Activated CD4-positive, alpha-beta T cell treated with anti-CD3 and anti-CD28 coated beads, Interleukin-2, amount 10 ng/mL, durations not matched to agents 24 days and 14 days (primary cell): ENCODE measurements at regions of chr11 and their contacts with region 1.

Region 1: DNA sequence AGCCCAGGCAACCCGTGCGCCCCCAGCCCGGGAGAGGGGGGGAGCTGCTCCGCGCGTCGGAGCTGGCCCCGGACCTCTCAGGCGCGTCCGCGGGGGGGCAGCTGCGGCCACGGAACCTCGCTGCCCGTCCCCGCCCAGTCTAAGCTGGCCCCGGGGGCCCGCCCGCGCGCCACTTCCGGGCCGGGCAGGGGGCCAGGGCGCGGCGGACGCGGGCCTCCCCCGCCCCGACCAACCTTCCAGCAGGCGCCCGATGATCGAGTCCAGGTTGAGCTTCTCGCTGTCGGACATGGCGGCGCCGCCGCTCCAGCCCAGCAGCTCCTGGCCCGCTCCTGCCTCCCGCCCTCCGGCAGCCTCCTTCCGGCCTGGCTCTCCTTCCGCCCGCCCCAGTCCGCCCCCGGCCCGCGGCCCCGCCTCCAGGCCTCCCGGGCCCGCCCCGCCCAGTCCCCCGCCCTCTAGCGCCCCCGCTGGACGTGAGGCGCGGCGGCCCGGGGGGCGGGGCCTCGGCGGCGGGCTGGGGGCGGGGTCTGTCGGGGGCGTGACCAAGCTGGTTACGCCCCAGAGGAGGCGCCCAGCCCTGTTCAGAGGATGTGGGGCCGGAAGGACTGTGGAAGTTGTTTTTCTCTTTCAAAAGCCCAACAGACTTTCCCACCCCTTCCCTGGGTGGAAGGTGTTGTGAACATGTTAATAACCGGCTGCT is at the start of gene PPP1CA:
- DNase-seq: peak; percentile 96
- H3K4me3 Mint-ChIP-seq: peak within 1 kb of the TSS; percentile 91
- H3K27ac Mint-ChIP-seq: peak within 1 kb of the TSS; percentile 87
- H3K4me1 Mint-ChIP-seq: peaks cover 45% of the 10 kb centered on the region
- H3K27me3 Mint-ChIP-seq: no peaks in the 10 kb centered on the region
- total RNA-seq, gene PPP1CA: 251 and 252 TPM in 2 replicates

Region 2: GRCh38 chr11:66842896-66843775 is 558.5 kb before region 1 on chr11 and contains the start of gene RCE1:
- intact Hi-C with region 1: no loop called
- DNase-seq: peak; percentile 98
- H3K4me3 Mint-ChIP-seq: peak within 1 kb of the TSS; percentile 91
- H3K27ac Mint-ChIP-seq: peak within 1 kb of the TSS; percentile 96
- H3K4me1 Mint-ChIP-seq: peaks cover 42% of the 10 kb centered on the region
- H3K27me3 Mint-ChIP-seq: no peaks in the 10 kb centered on the region
- total RNA-seq, gene RCE1: 28.5 and 32.9 TPM in 2 replicates

Region 3: GRCh38 chr11:67373925-67374618 is 27.6 kb before region 1 on chr11:
- intact Hi-C with region 1: no loop called
- DNase-seq: peak; percentile 83
- H3K4me3 Mint-ChIP-seq: peak overlapping the region; percentile 88
- H3K27ac Mint-ChIP-seq: peak overlapping the region; percentile 82
- H3K4me1 Mint-ChIP-seq: peaks cover 25% of the 10 kb centered on the region
- H3K27me3 Mint-ChIP-seq: peaks cover 55% of the 10 kb centered on the region

Region 4: GRCh38 chr11:67391304-67392132 is 10.1 kb before region 1 on chr11 and contains the start of gene RAD9A:
- intact Hi-C with region 1: loop called (anchors 1 kb)
- DNase-seq: peak; percentile 97
- H3K4me3 Mint-ChIP-seq: peak within 1 kb of the TSS; percentile 90
- H3K27ac Mint-ChIP-seq: peak within 1 kb of the TSS; percentile 80
- H3K4me1 Mint-ChIP-seq: peaks cover 31% of the 10 kb centered on the region
- H3K27me3 Mint-ChIP-seq: no peaks in the 10 kb centered on the region
- total RNA-seq, gene RAD9A: 31.6 and 34.3 TPM in 2 replicates

Region 5: GRCh38 chr11:67420646-67421420 is 19.2 kb after region 1 on chr11:
- intact Hi-C with region 1: loop called (anchors 1 kb)
- DNase-seq: peak; percentile 99
- H3K4me3 Mint-ChIP-seq: peak overlapping the region; percentile 77
- H3K27ac Mint-ChIP-seq: peak overlapping the region; percentile 72
- H3K4me1 Mint-ChIP-seq: peaks cover 36% of the 10 kb centered on the region
- H3K27me3 Mint-ChIP-seq: peaks cover 12% of the 10 kb centered on the region

Region 6: GRCh38 chr11:67428052-67428914 is 26.6 kb after region 1 on chr11 and contains the start of gene RPS6KB2:
- intact Hi-C with region 1: loop called (anchors 1 kb)
- DNase-seq: peak; percentile 100
- H3K4me3 Mint-ChIP-seq: peak within 1 kb of the TSS; percentile 98
- H3K27ac Mint-ChIP-seq: peak within 1 kb of the TSS; percentile 97
- H3K4me1 Mint-ChIP-seq: peaks cover 25% of the 10 kb centered on the region
- H3K27me3 Mint-ChIP-seq: no peaks in the 10 kb centered on the region
- total RNA-seq, gene RPS6KB2: 79.3 and 83.1 TPM in 2 replicates

Region 7: DNA sequence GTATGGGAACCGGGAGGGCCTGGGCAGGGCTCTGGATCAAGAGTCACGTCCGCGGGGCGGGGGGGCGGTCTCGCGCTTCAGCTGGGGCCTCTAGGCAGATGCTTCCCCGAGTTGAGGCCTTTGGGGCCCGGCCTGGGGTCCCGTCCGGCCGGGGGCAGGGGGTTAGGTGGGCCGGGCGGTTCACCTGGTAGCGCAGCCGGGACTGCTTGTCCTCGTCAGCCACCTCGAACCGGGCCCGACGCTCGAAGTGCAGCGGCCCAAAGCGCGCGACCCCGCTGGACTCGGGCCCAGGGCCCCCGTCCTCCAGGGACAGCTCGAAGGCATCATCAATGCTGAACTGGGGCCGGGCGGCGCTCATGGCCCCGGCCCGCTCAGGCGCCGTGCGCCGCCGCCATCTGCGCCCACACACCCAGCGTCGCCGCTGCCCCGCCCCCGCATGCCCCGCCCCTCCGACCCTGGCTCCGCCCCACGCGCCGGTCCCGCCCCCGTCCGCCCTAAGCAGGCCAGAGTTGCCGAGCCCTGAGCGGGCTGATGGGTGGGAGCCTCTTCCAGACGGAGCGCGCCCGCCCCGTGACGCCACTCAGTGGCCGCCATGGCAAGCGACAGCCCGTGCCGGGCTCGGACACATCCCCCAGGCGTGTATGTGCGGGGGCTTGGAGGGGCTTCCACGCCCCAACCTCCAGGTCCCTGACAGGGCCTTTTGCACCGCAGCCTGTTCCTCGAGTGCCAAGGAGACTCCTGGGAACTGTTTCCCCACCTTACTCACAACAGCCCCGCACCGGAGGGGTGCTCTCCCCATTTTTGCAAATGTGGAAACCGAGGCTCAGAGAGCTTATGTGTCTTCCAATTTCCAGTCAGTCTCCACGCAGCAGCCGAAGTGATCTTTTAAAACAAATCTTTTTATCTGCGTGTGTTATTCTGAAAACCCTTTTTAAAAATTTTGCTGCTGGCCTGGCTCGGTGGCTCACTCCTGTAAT is 67.5 kb after region 1 on chr11 and contains the start of gene TMEM134:
- intact Hi-C with region 1: loop called (anchors 1 kb)
- DNase-seq: peak; percentile 96
- H3K4me3 Mint-ChIP-seq: peak within 1 kb of the TSS; percentile 96
- H3K27ac Mint-ChIP-seq: peak within 1 kb of the TSS; percentile 84
- H3K4me1 Mint-ChIP-seq: peaks cover 25% of the 10 kb centered on the region
- H3K27me3 Mint-ChIP-seq: no peaks in the 10 kb centered on the region
- total RNA-seq, gene TMEM134: 56.8 and 58.3 TPM in 2 replicates

Region 8: DNA sequence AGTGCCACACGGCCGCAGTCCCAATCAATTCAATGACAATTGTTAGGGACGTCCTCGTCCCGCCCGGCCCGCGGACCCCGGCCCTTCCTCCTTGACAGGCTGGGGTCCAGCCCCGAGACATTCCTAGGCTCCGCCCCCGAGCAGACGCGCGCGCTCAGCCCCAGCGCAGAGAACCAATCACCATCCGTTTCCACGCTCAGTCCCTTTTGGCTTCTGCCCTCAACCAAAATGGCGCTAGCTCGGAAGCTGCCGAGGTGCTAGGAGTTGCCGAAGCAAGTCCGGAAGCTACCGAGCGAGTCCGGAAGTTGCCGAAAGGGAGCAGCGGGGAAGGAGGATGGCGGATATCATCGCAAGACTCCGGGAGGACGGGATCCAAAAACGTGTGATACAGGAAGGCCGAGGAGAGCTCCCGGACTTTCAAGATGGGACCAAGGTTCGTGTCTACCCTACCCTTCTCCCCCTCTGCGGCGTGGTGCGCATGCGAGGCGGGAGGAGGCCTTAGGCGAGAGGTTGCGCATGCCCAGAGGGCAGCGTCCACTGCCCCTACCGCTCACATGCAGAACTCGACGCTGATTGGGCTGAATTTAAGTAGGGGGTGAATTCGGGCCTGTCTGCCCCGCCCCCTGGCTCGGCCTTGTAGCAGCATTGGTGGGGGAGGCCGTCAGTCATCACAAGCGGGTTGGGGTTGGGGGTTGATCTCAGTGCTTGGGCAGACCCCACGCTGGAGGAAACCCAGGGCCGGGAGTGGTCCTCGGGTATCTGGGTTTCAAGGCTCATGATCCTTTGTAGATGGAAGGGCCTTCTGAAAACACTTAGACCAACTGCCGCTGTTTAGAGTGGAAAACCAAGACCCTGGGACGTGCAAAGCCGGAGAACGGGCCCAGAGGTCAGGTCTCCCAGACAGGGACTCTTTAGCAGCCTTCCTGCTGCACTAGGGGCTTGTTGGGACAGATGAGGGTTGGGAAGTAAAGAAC is 81.5 kb after region 1 on chr11 and contains the start of gene AIP:
- intact Hi-C with region 1: loop called (anchors 2 kb)
- DNase-seq: peak; percentile 99
- H3K4me3 Mint-ChIP-seq: peak within 1 kb of the TSS; percentile 96
- H3K27ac Mint-ChIP-seq: peak within 1 kb of the TSS; percentile 99
- H3K4me1 Mint-ChIP-seq: peaks cover 47% of the 10 kb centered on the region
- H3K27me3 Mint-ChIP-seq: peaks cover 5% of the 10 kb centered on the region
- total RNA-seq, gene AIP: 186 and 189 TPM in 2 replicates

Region 9: GRCh38 chr11:67545280-67545679 is 143.6 kb after region 1 on chr11:
- intact Hi-C with region 1: no loop called
- DNase-seq: no peak
- H3K4me3 Mint-ChIP-seq: no peak overlapping the region
- H3K27ac Mint-ChIP-seq: no peak overlapping the region
- H3K4me1 Mint-ChIP-seq: no peaks in the 10 kb centered on the region
- H3K27me3 Mint-ChIP-seq: peaks cover 2% of the 10 kb centered on the region